ENCODE measurements at regions of chr12 and their contacts with region 1.

Region 1: DNA sequence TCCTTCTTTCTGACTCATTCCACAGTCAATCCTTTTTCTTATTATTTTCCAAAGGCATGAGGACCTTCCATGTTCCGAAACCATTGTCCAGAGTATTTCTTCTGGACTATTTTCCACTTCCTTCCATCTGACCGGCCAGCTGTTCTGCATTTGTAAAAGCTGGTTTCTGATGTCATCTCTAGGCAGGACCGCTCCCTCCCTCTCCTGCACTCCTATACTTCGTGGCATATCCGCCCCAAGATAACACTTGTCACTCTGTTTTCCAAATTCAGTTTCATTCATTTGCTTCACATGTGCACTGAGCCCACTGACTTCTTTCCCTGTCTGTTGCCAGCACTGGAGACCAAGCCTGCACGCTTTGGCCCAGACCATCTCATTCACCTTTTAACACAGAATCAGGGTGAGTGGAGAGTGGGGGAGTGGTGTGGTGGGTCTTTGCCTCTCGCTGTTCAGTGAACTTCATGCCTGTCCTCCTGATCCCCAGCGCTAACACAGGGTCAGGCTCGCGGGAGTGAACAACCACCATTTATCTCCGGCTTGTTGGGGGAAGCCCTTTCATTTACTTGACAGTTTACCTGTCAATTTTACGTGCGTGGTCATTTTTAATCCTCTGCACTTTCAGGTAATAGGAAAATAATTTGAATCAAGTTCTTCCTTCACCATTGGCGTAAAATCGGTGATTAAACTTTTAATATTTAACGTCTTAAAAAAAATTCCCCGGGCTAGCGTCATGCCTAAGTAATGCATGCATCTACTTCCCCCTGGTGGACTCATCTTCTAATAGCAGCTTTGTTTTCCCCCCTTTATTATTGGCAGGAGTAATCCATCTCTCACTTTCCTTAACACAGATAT is 52.5 kb downstream of the C12orf75 start:
- DNase-seq: peak; percentile 89
- ATAC-seq: peak; percentile 75
- H3K4me3 ChIP-seq: peak overlapping the region; percentile 63
- H3K27ac ChIP-seq: no peak overlapping the region
- H3K4me1 ChIP-seq: peaks cover 10% of the 10 kb centered on the region
- H3K27me3 ChIP-seq: no peaks in the 10 kb centered on the region
- CTCF ChIP-seq: peak; percentile 94

Region 2: DNA sequence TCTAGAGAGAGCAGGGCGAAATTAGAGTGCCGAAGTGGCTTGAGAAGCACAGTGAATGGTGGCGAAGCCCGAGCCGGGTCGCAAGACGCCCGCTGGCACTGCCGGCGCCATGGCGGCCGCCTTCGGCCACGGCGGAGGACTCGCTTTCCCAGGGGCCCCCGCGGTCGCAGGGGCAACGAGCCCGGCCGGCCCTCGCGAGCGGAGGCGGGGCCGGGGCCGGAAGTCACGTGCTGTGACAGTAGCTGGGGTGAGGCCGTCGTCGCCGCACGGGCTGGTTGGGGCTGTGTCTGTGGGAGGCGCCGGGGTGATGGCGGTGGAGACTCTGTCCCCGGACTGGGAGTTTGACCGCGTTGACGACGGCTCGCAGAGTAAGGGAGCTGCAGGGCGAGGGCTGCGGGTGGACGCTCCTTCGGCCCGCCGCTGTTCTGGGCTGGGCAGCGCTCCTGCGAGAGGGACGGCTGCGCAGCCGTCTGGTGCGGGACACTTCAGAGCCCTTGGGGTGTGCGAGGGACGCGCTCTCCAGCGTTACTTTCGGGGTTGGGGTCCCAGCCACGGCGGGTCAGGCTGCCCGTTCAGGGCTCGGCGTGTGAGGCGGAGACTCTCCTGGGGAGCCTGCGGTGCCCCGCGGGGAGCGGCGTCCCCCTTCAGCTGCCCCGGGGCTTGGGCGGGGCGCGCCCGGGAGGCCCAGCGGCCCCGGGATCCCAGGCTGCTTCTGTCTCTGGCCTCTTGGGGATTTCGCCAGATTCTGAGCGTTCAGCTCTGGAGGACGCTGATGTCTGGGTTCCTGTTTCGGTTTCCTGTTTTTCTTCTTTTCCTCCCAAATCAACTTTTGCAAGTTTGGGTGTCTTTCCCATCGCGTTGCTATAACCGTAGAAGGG is 275.3 kb before region 1 on chr12 and contains the start of gene WASHC4:
- CTCF ChIA-PET with region 1: no interaction called
- POLR2A ChIA-PET with region 1: no interaction called
- intact Hi-C with region 1: loop called (anchors 5 kb)
- DNase-seq: peak; percentile 97
- ATAC-seq: peak; percentile 92
- H3K4me3 ChIP-seq: peak within 1 kb of the TSS; percentile 72
- H3K27ac ChIP-seq: peak within 1 kb of the TSS; percentile 76
- H3K4me1 ChIP-seq: peaks cover 24% of the 10 kb centered on the region; the same call in 1 of the 2 replicates
- H3K27me3 ChIP-seq: no peaks in the 10 kb centered on the region
- CTCF ChIP-seq: no peak
- total RNA-seq, gene WASHC4: 38.2 and 46.9 TPM in 2 replicates

Region 3: DNA sequence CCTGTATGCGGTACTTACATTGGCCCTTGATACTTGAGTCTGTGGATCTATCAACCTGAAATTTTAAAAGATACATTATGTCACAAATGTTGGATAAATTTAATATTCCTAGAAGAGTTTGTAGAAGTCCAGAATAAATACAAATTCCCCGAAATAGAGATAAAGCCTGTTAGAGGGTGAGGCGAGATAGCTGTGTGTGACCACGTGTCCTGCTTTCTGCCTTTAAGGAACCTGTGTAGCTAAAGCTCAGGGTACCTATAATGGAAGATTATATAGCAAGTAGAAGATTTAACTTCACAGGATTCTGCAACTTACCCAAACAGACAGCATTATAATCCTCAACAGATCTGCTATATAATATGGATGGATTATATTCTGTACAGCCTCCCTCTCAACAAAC is 205.8 kb before region 1 on chr12:
- CTCF ChIA-PET with region 1: no interaction called
- POLR2A ChIA-PET with region 1: no interaction called
- intact Hi-C with region 1: loop called (anchors 2 kb)
- DNase-seq: no peak
- ATAC-seq: no peak
- H3K4me3 ChIP-seq: no peak overlapping the region
- H3K27ac ChIP-seq: no peak overlapping the region
- H3K4me1 ChIP-seq: no peaks in the 10 kb centered on the region
- H3K27me3 ChIP-seq: no peaks in the 10 kb centered on the region
- CTCF ChIP-seq: no peak

Region 4: GRCh38 chr12:105235732-105236476 is 147.1 kb before region 1 on chr12 and contains the start of gene APPL2:
- CTCF ChIA-PET with region 1: no interaction called
- POLR2A ChIA-PET with region 1: no interaction called
- intact Hi-C with region 1: loop called (anchors 1 kb)
- DNase-seq: peak; percentile 92
- ATAC-seq: peak; percentile 90
- H3K4me3 ChIP-seq: peak within 1 kb of the TSS; percentile 85
- H3K27ac ChIP-seq: peak within 1 kb of the TSS; percentile 60
- H3K4me1 ChIP-seq: peaks cover 26% of the 10 kb centered on the region
- H3K27me3 ChIP-seq: no peaks in the 10 kb centered on the region
- CTCF ChIP-seq: peak; percentile 50
- total RNA-seq, gene APPL2: 36.2 and 42.2 TPM in 2 replicates